ENCODE measurements at regions of chr12 and their contacts with region 1.

Region 1: GRCh38 chr12:24798335-24798734 is 150.6 kb downstream of the BCAT1 start:
- DNase-seq: no peak
- ATAC-seq: peak; percentile 86
- H3K4me3 Mint-ChIP-seq: peak overlapping the region; percentile 5
- H3K27ac Mint-ChIP-seq: peak overlapping the region; percentile 77
- H3K4me1 Mint-ChIP-seq: peaks cover 44% of the 10 kb centered on the region
- H3K27me3 Mint-ChIP-seq: no peaks in the 10 kb centered on the region
- CTCF ChIP-seq: no peak

Region 2: GRCh38 chr12:24814379-24815113 is 16.2 kb after region 1 on chr12:
- CTCF ChIA-PET with region 1: interaction called, 3 read pairs
- POLR2A ChIA-PET with region 1: interaction called, 9 read pairs
- intact Hi-C with region 1: loop called (anchors 1 kb)
- DNase-seq: no peak
- ATAC-seq: peak; percentile 85
- H3K4me3 Mint-ChIP-seq: peak overlapping the region; percentile 77
- H3K27ac Mint-ChIP-seq: peak overlapping the region; percentile 80
- H3K4me1 Mint-ChIP-seq: peaks cover 34% of the 10 kb centered on the region
- H3K27me3 Mint-ChIP-seq: no peaks in the 10 kb centered on the region
- CTCF ChIP-seq: no peak

Measured in activated B cell treated with CpG ODN at 0.5 μM for 24 hours (primary cell).